AG04450 (cell line): ENCODE measurements at regions of chr5 and their contacts with region 1.

Region 1: GRCh38 chr5:146458894-146459293 is 11.8 kb downstream of the TCERG1 start:
- DNase-seq: no peak
- H3K4me3 ChIP-seq: no peak overlapping the region
- H3K27ac ChIP-seq: no peak overlapping the region
- H3K27me3 ChIP-seq: no peaks in the 10 kb centered on the region
- CTCF ChIP-seq: no peak

Region 2: GRCh38 chr5:146291421-146292074 is 167.3 kb before region 1 on chr5:
- CTCF ChIA-PET with region 1: no interaction called
- POLR2A ChIA-PET with region 1: no interaction called
- DNase-seq: no peak
- H3K4me3 ChIP-seq: no peak overlapping the region
- H3K27ac ChIP-seq: no peak overlapping the region
- H3K27me3 ChIP-seq: no peaks in the 10 kb centered on the region
- CTCF ChIP-seq: peak; percentile 63

Region 3: DNA sequence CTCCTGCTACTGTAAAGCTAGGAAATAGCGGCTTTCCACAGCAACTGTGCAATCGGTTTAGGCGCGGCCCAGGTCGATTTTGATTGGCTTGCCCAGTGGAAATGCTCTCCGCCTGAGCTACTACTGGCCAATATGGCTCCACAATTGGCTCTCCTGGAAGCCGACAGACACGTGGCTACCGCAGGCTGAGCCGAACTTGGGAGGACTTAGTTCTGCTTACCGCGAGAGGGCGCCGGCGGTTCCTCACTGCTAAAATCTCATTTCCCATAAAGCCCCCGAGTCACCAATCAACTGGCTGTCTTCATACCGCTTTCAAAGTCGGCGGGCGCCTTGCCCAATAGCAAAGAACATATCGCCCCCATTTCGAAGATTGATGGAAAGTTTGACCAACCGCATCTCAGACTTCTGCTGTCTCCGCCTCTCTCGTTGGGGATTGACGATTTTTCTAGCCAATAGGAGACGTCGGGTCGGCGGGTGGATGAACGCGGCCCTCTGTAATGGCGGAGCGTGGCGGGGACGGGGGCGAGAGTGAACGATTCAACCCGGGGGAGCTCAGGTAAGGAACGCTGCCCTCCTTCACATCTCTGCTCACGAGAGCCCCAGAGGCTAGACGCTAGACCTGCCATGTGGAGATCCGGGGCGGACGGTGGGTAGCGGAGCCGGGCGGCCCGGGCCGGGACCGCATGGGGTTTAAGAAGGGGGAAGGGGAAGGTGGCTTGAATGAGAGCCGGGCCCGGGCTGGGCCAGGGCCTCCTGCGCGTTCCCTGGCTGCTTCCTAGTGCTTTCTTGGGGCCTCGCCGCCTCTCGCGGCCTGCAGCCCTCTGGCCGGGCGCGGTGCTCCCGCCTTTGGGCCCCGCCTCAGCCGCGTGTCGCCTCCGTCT is 11.8 kb before region 1 on chr5 and contains the start of gene TCERG1:
- CTCF ChIA-PET with region 1: interaction called, 23 read pairs
- POLR2A ChIA-PET with region 1: no interaction called
- DNase-seq: peak; percentile 100
- H3K4me3 ChIP-seq: peak within 1 kb of the TSS; percentile 93
- H3K27ac ChIP-seq: peak within 1 kb of the TSS; percentile 83
- H3K27me3 ChIP-seq: no peaks in the 10 kb centered on the region
- CTCF ChIP-seq: peak; percentile 75
- polyA plus RNA-seq, gene TCERG1: 43.1 and 46.4 TPM in 2 replicates